Activated CD4-positive, alpha-beta T cell treated with anti-CD3 and anti-CD28 coated beads for 36 hours (primary cell): ENCODE measurements at regions of chr16 and their contacts with region 1.

Region 1: DNA sequence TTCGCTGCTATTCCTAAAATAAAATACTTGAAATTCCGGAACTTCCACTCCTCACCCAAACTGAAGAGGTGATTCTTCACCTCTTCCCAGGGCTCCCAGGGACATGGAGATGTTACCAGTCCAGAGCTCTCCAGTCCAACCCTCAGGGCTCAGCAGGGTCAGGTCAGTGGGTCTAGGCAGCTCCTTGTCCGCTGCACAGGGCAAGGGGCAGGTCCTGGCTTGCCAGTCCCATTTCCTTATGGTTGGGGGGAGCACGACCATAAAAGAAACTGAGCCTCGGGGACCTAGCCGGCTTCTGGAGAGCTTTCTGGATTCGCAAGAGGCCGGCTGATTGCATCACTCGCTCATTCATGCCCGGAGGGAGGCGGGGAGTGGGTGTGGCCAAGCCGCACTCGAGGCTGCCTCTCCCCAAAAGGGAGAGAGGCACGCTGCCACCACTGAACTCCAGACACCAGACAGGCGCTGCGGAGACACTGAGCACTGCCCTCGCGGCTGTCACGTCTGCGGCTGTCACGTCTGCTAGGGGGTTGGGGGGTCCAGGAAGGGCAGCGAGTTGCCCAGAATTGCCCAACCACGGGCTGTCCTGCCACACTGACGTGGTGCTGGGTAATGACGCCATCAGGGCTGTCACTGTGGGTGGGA is 15.8 kb downstream of the SLC7A5 start:
- DNase-seq: peak; percentile 97
- ATAC-seq: peak; percentile 76
- H3K4me3 Mint-ChIP-seq: peak overlapping the region; percentile 55
- H3K27ac Mint-ChIP-seq: peak overlapping the region; percentile 92
- H3K4me1 Mint-ChIP-seq: peaks cover 61% of the 10 kb centered on the region
- H3K27me3 Mint-ChIP-seq: no peaks in the 10 kb centered on the region

Region 2: GRCh38 chr16:87702325-87702811 is 151.2 kb before region 1 on chr16:
- CTCF ChIA-PET with region 1: interaction called, 5 read pairs
- POLR2A ChIA-PET with region 1: no interaction called
- intact Hi-C with region 1: loop called in 1 of 2 experiments (anchors 5 kb)
- DNase-seq: peak; percentile 69
- ATAC-seq: peak; percentile 60
- H3K4me3 Mint-ChIP-seq: no peak overlapping the region
- H3K27ac Mint-ChIP-seq: peak overlapping the region; percentile 75
- H3K4me1 Mint-ChIP-seq: peaks cover 59% of the 10 kb centered on the region
- H3K27me3 Mint-ChIP-seq: no peaks in the 10 kb centered on the region

Region 3: GRCh38 chr16:87806603-87807546 is 46.7 kb before region 1 on chr16:
- CTCF ChIA-PET with region 1: interaction called, 13 read pairs
- POLR2A ChIA-PET with region 1: interaction called, 5 read pairs
- intact Hi-C with region 1: loop called in 1 of 2 experiments (anchors 1 kb)
- DNase-seq: peak; percentile 85
- ATAC-seq: peak; percentile 88
- H3K4me3 Mint-ChIP-seq: peak overlapping the region; percentile 80
- H3K27ac Mint-ChIP-seq: peak overlapping the region; percentile 98
- H3K4me1 Mint-ChIP-seq: peaks cover 29% of the 10 kb centered on the region
- H3K27me3 Mint-ChIP-seq: no peaks in the 10 kb centered on the region

Region 4: DNA sequence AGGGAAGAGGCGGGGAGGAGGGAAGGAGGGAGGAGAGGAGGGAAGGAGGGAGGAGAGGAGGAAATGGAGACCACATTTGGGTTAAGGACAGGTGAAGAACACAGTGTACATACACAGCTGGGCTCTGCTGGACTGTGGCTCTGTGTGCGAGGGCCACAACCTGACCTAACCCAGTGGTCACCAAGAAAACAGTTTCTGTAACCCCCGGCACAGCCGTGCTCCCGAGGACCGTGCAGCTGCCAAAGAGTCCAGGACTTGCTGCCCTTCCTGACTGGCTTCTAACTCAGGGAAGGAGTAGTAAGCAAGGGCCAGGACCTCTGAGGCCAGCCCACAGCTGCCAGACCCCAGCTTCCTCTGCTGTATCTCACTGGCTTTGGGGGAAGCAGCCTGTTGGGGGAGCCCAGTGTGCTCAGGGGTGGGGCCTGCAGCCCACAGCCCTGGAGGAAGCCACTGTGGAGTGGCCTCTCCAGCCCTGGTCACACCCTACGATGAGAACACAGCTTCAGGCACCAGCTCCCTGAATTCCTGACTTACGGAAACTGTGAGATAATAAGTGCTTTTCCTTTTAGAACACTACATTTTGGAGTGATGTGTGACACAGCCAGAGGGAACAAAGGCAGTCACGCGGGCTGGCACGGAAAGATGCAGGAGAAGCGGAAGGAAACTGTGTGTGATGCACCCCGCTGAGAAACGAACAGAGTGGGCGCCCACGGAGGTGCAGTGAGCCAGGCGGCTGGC is 16.5 kb before region 1 on chr16:
- CTCF ChIA-PET with region 1: interaction called, 13 read pairs
- POLR2A ChIA-PET with region 1: interaction called, 3 read pairs
- intact Hi-C with region 1: no loop called
- DNase-seq: no peak
- ATAC-seq: no peak
- H3K4me3 Mint-ChIP-seq: no peak overlapping the region
- H3K27ac Mint-ChIP-seq: no peak overlapping the region
- H3K4me1 Mint-ChIP-seq: no peaks in the 10 kb centered on the region
- H3K27me3 Mint-ChIP-seq: no peaks in the 10 kb centered on the region

Region 5: DNA sequence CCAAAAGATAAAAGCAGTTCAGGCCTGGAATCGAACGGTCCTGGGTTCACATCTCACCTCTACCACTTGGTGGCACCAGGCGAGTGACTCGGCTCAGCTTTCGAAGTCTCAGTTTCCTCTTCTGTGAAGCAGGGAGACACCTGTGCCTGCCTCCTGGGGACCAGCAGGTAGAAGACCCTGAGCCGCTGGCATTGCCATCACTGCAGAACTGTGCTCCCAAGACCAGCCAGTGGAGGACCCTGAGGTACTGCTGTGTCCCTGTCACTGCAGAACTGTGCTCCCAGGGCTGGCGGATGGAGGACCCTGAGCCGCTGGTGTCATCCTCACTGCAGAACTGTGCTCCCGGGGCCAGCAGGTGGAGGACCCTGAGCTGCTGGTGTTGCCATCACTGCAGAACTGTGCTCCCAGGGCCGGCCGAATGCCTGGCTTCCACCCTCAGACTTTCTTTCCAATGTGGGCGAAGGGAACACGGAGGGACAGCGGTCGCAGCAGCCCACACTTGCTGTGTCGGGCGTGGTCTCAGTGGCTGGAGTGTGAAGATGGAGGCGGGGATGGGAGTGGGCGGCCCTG is 24.5 kb after region 1 on chr16:
- CTCF ChIA-PET with region 1: interaction called, 19 read pairs
- POLR2A ChIA-PET with region 1: interaction called, 3 read pairs
- intact Hi-C with region 1: no loop called
- DNase-seq: peak; percentile 63
- ATAC-seq: peak; percentile 14
- H3K4me3 Mint-ChIP-seq: no peak overlapping the region
- H3K27ac Mint-ChIP-seq: no peak overlapping the region
- H3K4me1 Mint-ChIP-seq: peaks cover 38% of the 10 kb centered on the region
- H3K27me3 Mint-ChIP-seq: no peaks in the 10 kb centered on the region

Region 6: DNA sequence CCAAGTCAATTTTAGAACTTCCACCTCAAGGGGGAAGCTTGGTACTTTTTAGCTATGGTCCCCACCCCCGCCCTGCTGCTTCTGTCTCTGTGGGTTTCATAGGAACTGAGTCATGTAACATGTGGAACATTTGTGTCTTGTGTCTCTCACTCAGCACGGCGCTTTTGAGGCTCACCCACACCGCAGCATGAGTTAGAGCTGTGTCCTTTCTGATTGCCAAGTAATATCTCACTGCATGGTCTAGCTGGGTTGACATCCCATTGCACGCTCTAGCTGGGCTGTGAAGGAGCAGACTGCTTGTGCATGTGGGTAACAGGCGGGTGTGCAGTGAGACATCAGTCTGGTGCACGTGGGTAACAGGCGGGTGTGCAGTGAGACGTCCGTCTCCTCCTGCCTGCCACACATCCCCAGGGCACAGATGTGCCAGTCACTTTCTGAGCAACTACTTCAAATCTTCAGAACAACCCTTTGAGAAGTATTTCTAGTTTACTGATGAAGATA is 42.2 kb after region 1 on chr16:
- CTCF ChIA-PET with region 1: interaction called, 11 read pairs
- POLR2A ChIA-PET with region 1: interaction called, 3 read pairs
- intact Hi-C with region 1: loop called in 1 of 2 experiments (anchors 1 kb)
- DNase-seq: peak; percentile 95
- ATAC-seq: peak; percentile 91
- H3K4me3 Mint-ChIP-seq: peak overlapping the region; percentile 44
- H3K27ac Mint-ChIP-seq: peak overlapping the region; percentile 99
- H3K4me1 Mint-ChIP-seq: peaks cover 56% of the 10 kb centered on the region
- H3K27me3 Mint-ChIP-seq: no peaks in the 10 kb centered on the region

Region 7: DNA sequence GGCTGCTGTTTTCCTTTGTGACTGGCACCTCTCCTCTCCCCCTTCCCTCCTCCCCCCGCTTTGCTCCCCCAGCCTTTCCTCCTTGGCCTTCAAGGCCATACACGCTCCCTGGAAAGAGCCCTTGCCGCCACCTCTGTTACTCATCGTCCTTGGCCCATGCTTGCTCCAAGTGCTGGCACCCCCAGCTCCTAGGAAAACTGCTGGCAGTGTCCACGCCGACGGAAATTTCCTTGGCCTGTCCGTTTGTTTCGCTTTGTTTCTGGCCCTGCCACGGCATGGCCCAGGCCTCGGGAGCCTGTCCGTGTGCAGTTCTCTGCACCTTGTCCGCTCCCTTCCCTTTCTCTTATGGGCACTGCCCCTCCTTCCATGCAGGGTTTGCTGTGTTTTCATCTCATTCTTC is 64.8 kb after region 1 on chr16:
- CTCF ChIA-PET with region 1: interaction called, 25 read pairs
- POLR2A ChIA-PET with region 1: no interaction called
- intact Hi-C with region 1: no loop called
- DNase-seq: no peak
- ATAC-seq: no peak
- H3K4me3 Mint-ChIP-seq: no peak overlapping the region
- H3K27ac Mint-ChIP-seq: no peak overlapping the region
- H3K4me1 Mint-ChIP-seq: no peaks in the 10 kb centered on the region
- H3K27me3 Mint-ChIP-seq: no peaks in the 10 kb centered on the region